ENCODE measurements at regions of chr10 and their contacts with region 1.

Region 1: GRCh38 chr10:122435212-122435827 is 19.1 kb upstream of the ARMS2 start:
- DNase-seq: no peak
- H3K4me3 Mint-ChIP-seq: no peak overlapping the region
- H3K27ac Mint-ChIP-seq: no peak overlapping the region
- H3K4me1 Mint-ChIP-seq: no peaks in the 10 kb centered on the region
- H3K27me3 Mint-ChIP-seq: no peaks in the 10 kb centered on the region

Region 2: DNA sequence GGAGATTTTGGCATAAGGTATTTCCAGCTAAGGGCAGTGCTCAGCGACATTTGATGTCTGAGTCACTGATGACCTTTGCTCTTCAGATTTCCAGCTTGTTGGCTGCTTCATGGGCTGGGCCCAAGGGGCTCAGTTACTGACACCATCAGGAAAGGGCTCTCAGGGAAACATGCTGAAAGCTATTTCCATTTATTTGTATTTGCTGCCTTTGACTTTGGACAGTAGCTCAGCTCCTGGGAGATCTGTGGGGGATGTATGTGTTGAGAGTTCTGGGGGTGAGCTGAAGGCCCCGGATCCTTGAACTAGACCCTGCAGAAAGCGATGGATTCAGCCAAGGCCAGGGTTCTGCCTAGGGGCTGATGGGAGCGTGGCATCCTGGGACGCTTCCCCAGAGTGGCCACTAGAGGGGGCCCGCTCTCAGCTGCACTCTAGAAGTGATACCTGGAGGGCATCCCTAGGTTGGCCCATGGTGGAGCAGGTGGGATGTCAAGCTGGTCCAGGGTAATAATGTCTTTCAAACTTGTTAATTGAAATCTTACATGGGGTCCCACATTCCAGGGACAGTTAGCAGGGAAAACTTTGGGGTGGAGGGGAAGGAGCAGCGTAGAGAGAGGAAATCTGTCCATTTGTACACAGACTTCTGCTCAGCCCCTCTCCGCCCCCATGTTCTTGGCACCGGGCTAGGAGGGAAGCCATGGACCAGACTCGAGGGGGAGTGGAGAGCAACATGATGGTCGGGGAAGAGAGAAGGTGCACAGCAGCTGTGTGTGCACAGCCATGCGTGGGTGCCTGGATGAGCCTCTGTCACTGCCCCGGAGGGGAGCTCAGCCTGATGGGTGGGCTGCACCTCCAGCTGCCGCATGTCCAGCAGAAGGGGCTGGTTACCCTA is 167.2 kb before region 1 on chr10:
- CTCF ChIA-PET with region 1: interaction called, 23 read pairs
- POLR2A ChIA-PET with region 1: no interaction called
- DNase-seq: peak; percentile 56
- H3K4me3 Mint-ChIP-seq: no peak overlapping the region
- H3K27ac Mint-ChIP-seq: no peak overlapping the region
- H3K4me1 Mint-ChIP-seq: no peaks in the 10 kb centered on the region
- H3K27me3 Mint-ChIP-seq: peaks cover 10% of the 10 kb centered on the region

Region 3: GRCh38 chr10:122279725-122280141 is 155.6 kb before region 1 on chr10:
- CTCF ChIA-PET with region 1: interaction called, 18 read pairs
- POLR2A ChIA-PET with region 1: no interaction called
- DNase-seq: peak; percentile 27
- H3K4me3 Mint-ChIP-seq: no peak overlapping the region
- H3K27ac Mint-ChIP-seq: no peak overlapping the region
- H3K4me1 Mint-ChIP-seq: no peaks in the 10 kb centered on the region
- H3K27me3 Mint-ChIP-seq: peaks cover 9% of the 10 kb centered on the region

Region 4: DNA sequence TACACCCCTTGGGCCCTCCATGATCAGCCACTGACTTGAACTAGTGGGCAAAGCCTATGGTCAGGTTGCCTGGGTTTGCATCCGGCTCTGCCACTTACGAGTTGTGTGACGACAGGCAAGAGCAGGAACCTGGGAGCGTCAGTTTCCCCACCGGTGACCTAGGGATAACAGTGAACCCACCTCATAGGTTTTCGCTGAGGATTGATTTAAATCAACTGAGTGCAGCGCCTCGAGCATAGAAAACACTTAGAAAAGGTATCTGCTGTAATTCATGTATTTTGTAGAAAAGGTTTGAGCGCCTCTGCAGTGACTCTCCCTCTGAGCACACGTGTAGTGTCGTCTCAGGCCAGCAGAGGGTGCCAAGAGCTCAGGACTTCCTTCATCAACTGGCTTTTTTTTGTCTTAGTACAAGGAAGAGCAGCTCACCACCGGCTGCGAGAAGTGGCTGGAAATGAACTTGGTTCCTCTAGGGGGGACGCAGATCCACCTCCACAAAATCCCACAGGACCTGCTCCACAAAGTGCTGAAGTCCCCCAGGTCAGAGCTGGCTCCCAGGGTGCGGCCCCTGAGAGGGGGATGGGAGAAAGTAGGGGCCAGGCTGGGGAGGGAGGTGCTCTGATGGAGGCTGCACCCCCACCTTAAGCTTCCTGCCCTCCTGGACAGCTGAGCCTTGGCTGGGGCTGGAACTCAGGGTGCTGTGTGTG is 136.6 kb before region 1 on chr10:
- CTCF ChIA-PET with region 1: interaction called, 87 read pairs
- POLR2A ChIA-PET with region 1: no interaction called
- DNase-seq: peak; percentile 70
- H3K4me3 Mint-ChIP-seq: no peak overlapping the region
- H3K27ac Mint-ChIP-seq: no peak overlapping the region
- H3K4me1 Mint-ChIP-seq: peaks cover 35% of the 10 kb centered on the region
- H3K27me3 Mint-ChIP-seq: peaks cover 27% of the 10 kb centered on the region

Region 5: DNA sequence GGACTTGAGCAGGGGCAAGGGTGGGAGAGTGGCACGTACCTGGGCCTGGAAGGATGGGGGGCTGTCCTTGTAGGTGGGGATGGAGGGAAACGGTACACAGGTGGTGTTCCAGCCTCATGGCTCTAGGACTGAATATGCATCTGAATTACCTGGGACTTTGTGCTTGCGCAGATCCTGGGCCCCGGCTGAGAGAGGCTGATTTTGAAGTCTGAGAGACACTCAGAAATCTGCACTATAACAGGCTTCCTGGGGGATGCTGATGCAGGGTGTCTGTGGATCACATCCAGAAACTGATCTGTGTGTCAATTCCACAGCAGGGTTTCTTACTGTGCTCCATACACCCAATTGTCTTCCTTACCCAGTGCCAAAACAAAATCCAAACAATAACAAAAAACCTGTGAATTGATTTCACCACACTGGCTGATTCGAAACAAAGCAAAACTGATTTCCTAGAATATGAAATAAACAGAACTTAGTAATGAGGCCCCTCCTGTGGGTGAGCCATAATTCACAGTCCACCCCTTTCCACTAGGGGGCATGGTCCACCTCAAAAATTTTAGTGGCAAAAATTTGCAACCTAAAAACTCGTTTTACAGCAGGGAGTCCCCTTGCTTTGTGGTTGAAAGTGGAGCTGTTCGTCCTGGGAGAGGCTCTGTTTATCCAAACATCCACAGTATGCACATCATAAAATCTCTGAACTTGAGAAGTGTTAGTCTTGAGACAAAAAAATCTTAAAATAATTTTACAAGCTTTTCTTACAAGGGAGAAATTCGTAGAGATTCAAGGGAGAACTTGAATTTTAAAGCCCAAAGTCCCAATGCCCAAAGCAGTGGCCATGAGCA is 92.8 kb before region 1 on chr10:
- CTCF ChIA-PET with region 1: interaction called, 56 read pairs
- POLR2A ChIA-PET with region 1: no interaction called
- DNase-seq: peak; percentile 41
- H3K4me3 Mint-ChIP-seq: no peak overlapping the region
- H3K27ac Mint-ChIP-seq: no peak overlapping the region
- H3K4me1 Mint-ChIP-seq: peaks cover 2% of the 10 kb centered on the region
- H3K27me3 Mint-ChIP-seq: peaks cover 11% of the 10 kb centered on the region

Region 6: GRCh38 chr10:122407375-122408125 is 27.8 kb before region 1 on chr10:
- CTCF ChIA-PET with region 1: no interaction called
- POLR2A ChIA-PET with region 1: no interaction called
- DNase-seq: no peak
- H3K4me3 Mint-ChIP-seq: no peak overlapping the region
- H3K27ac Mint-ChIP-seq: no peak overlapping the region
- H3K4me1 Mint-ChIP-seq: peaks cover 9% of the 10 kb centered on the region
- H3K27me3 Mint-ChIP-seq: no peaks in the 10 kb centered on the region

Region 7: DNA sequence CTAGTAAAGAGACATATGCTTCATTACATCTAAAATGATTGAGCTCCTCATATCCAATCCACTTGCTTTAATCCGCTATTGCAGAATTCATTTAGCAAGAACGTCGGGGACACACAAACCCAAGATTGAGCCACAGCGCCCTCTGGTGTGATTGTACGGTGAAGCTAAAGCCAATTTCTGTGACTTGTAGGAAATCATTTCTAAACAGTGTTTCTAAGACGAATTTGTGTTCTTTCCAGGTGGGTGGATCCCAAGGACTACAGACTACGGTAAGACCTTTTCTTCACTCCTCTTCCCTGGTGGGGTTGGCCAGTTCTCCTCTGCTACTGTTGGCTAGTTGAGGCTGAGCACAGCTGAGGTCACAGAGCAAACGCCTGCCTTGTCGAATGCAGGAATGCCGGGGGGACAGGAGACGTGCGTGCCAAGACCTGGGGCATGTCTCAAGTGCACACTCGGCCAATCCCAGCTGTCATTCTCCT is 130.4 kb after region 1 on chr10:
- CTCF ChIA-PET with region 1: interaction called, 21 read pairs
- POLR2A ChIA-PET with region 1: no interaction called
- DNase-seq: peak; percentile 74
- H3K4me3 Mint-ChIP-seq: no peak overlapping the region
- H3K27ac Mint-ChIP-seq: no peak overlapping the region
- H3K4me1 Mint-ChIP-seq: peaks cover 7% of the 10 kb centered on the region
- H3K27me3 Mint-ChIP-seq: peaks cover 41% of the 10 kb centered on the region

Region 8: DNA sequence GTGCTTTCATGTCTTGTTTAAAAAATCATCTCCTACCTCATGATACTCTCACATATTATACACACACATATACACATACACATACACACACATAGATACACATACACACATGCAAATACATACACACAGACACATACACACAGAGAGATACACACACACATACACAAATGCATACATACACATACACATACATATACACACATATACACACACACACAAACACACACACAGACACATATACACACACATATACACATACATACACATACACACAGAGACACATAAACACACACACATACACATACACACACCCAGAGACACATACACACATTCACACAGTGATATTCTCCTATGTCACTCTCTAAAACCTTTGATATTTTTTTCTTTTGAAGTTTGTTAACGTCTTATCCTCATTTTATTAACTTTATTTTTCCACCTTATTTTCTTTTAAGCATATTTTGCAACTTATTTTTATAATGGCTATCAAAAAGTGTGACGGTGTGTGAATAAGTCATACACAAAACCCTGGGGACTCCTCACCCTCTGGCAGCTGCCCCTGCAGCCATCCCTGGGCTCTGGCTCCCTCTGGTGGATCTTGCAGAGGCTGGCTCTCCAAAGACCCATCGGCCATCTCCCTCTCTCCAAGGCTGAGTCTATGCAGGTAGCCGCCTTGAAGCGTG is 268.3 kb after region 1 on chr10:
- CTCF ChIA-PET with region 1: no interaction called
- POLR2A ChIA-PET with region 1: no interaction called
- DNase-seq: peak; percentile 55
- H3K4me3 Mint-ChIP-seq: no peak overlapping the region
- H3K27ac Mint-ChIP-seq: no peak overlapping the region
- H3K4me1 Mint-ChIP-seq: peaks cover 11% of the 10 kb centered on the region
- H3K27me3 Mint-ChIP-seq: peaks cover 3% of the 10 kb centered on the region